T-cell (primary cell): ENCODE measurements at regions of chr1 and their contacts with region 1.

Region 1: DNA sequence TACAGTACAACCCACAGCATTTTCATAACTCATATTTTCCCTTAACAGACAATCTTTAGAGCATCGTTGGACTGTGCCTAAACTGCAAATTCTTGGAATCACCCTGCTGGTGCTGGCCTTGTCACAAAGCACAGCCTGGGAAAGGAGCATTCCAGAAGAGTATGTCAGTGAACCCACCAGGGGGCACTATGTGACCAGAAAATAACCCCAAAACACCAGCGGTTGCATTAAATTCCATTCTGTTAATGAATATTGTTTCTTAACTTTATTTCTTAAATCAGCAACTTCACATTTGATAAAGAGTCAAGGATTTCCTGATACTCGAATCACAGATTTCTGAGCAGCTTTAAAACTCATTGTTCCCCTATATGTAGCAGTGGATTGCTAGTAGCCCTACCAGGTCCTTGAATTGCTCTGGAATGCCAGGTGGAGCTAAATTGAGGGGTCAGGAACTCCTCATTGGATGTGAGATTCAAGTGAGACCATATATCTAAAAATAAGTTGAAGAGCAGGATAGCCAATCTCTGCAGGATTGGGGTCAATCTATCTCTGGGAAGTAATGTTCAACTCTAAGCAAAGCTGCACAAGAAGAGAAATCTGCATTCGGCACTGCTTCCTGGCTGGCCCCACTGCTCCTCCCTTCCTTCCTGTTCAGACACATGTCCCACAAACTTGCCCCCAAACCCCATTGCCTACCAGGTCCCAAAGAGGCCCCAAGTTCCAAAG is 12.7 kb upstream of the RAB4A start:
- DNase-seq: peak in 34 of 35 experiments; percentile 19 to 85 (median 54)
- ATAC-seq: peak in 3 of 4 experiments; percentile 31 to 36 (median 31)
- H3K4me3 ChIP-seq: peak overlapping the region in 1 of 2 donors; percentile 25
- H3K4me3 Mint-ChIP-seq: peak overlapping the region in 1 of 3 donors; percentile 34
- H3K27ac ChIP-seq: peak overlapping the region; percentile 20
- H3K27ac Mint-ChIP-seq: peak overlapping the region; percentile 78 to 86
- H3K4me1 ChIP-seq: peaks cover 13 to 30% of the 10 kb centered on the region in 2 experiments
- H3K4me1 Mint-ChIP-seq: peaks cover 30 to 34% (median 33%) of the 10 kb centered on the region in 3 donors
- H3K27me3 ChIP-seq: no peaks in the 10 kb centered on the region
- H3K27me3 Mint-ChIP-seq: no peaks in the 10 kb centered on the region

Region 2: GRCh38 chr1:228407118-228408042 is 850.8 kb before region 1 on chr1:
- CTCF ChIA-PET with region 1: no interaction called
- POLR2A ChIA-PET with region 1: interaction called in 1 of 2 experiments, 13 read pairs
- DNase-seq: no peak
- ATAC-seq: no peak
- H3K4me3 ChIP-seq: peak overlapping the region; percentile 73 to 74
- H3K4me3 Mint-ChIP-seq: peak overlapping the region; percentile 89 to 93 (median 93)
- H3K27ac ChIP-seq: peak overlapping the region; percentile 42
- H3K27ac Mint-ChIP-seq: peak overlapping the region in 1 of 2 donors; percentile 77
- H3K4me1 ChIP-seq: peaks cover 18 to 55% of the 10 kb centered on the region in 2 experiments
- H3K4me1 Mint-ChIP-seq: peaks cover 32 to 49% (median 45%) of the 10 kb centered on the region in 3 donors
- H3K27me3 ChIP-seq: no peaks in the 10 kb centered on the region
- H3K27me3 Mint-ChIP-seq: no peaks in the 10 kb centered on the region

Region 3: DNA sequence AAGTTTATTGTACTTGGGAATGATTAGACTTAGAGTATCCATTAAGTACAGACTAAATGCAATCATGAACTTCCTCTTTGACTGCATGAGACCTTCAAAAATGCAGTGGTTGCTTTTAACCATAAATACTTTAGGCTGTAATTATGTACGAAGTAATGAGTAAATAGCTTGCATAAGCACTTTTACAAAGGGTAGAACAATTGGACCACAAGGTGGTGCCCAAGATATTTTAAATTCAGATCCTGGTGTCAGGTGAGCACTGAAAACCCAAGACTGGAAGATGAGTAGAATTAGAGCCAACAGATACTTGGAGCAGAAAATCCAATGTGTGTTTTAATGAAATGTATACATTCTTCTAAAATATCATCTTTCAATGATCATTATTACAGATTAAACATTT is 566.3 kb before region 1 on chr1:
- CTCF ChIA-PET with region 1: interaction called, 7 to 36 read pairs
- POLR2A ChIA-PET with region 1: no interaction called
- DNase-seq: peak in 11 of 35 experiments; percentile 2 to 69 (median 17)
- ATAC-seq: peak in 2 of 4 experiments; percentile 23 to 47
- H3K4me3 ChIP-seq: no peak overlapping the region
- H3K4me3 Mint-ChIP-seq: no peak overlapping the region
- H3K27ac ChIP-seq: no peak overlapping the region
- H3K27ac Mint-ChIP-seq: no peak overlapping the region
- H3K4me1 ChIP-seq: peaks cover 2 to 6% of the 10 kb centered on the region in 2 experiments
- H3K4me1 Mint-ChIP-seq: peaks cover 9 to 10% (median 9%) of the 10 kb centered on the region in 3 donors
- H3K27me3 ChIP-seq: peaks cover 0 to 2% of the 10 kb centered on the region in 2 experiments
- H3K27me3 Mint-ChIP-seq: peaks cover 12 to 13% of the 10 kb centered on the region in 2 donors

Region 4: GRCh38 chr1:229227298-229227919 is 30.8 kb before region 1 on chr1:
- CTCF ChIA-PET with region 1: interaction called in 1 of 2 experiments, 44 read pairs
- POLR2A ChIA-PET with region 1: interaction called in 1 of 2 experiments, 3 read pairs
- DNase-seq: peak; percentile 54 to 88 (median 78)
- ATAC-seq: peak; percentile 83 to 91 (median 86)
- H3K4me3 ChIP-seq: no peak overlapping the region
- H3K4me3 Mint-ChIP-seq: peak overlapping the region in 1 of 3 donors; percentile 3
- H3K27ac ChIP-seq: no peak overlapping the region
- H3K27ac Mint-ChIP-seq: no peak overlapping the region
- H3K4me1 ChIP-seq: peaks cover 11 to 22% of the 10 kb centered on the region in 2 experiments
- H3K4me1 Mint-ChIP-seq: peaks cover 18 to 27% (median 20%) of the 10 kb centered on the region in 3 donors
- H3K27me3 ChIP-seq: peaks cover 0 to 7% of the 10 kb centered on the region in 2 experiments
- H3K27me3 Mint-ChIP-seq: peaks cover 0 to 11% of the 10 kb centered on the region in 2 donors

Region 5: GRCh38 chr1:229507951-229508822 is 250.0 kb after region 1 on chr1 and contains the start of gene NUP133:
- CTCF ChIA-PET with region 1: interaction called in 1 of 2 experiments, 11 read pairs
- POLR2A ChIA-PET with region 1: no interaction called
- DNase-seq: peak; percentile 94 to 100 (median 98)
- ATAC-seq: peak; percentile 97 to 98 (median 98)
- H3K4me3 ChIP-seq: peak within 1 kb of the TSS; percentile 84 to 98
- H3K4me3 Mint-ChIP-seq: peak within 1 kb of the TSS; percentile 89 to 92 (median 89)
- H3K27ac ChIP-seq: peak within 1 kb of the TSS; percentile 83
- H3K27ac Mint-ChIP-seq: peak within 1 kb of the TSS; percentile 98
- H3K4me1 ChIP-seq: peaks cover 14% of the 10 kb centered on the region in 2 experiments
- H3K4me1 Mint-ChIP-seq: peaks cover 20 to 44% (median 41%) of the 10 kb centered on the region in 3 donors
- H3K27me3 ChIP-seq: no peaks in the 10 kb centered on the region
- H3K27me3 Mint-ChIP-seq: peaks cover 0 to 2% of the 10 kb centered on the region in 2 donors
- total RNA-seq, gene NUP133: 32.3 to 47.6 (median 45.3) TPM

Region 6: GRCh38 chr1:229640455-229640854 is 382.3 kb after region 1 on chr1:
- CTCF ChIA-PET with region 1: no interaction called
- POLR2A ChIA-PET with region 1: interaction called in 1 of 2 experiments, 10 read pairs
- DNase-seq: no peak
- ATAC-seq: no peak
- H3K4me3 ChIP-seq: no peak overlapping the region
- H3K4me3 Mint-ChIP-seq: no peak overlapping the region
- H3K27ac ChIP-seq: no peak overlapping the region
- H3K27ac Mint-ChIP-seq: no peak overlapping the region
- H3K4me1 ChIP-seq: no peaks in the 10 kb centered on the region
- H3K4me1 Mint-ChIP-seq: peaks cover 0 to 11% (median 9%) of the 10 kb centered on the region in 3 donors
- H3K27me3 ChIP-seq: no peaks in the 10 kb centered on the region
- H3K27me3 Mint-ChIP-seq: no peaks in the 10 kb centered on the region